ENCODE measurements at regions of chr6 and their contacts with region 1.

Region 1: DNA sequence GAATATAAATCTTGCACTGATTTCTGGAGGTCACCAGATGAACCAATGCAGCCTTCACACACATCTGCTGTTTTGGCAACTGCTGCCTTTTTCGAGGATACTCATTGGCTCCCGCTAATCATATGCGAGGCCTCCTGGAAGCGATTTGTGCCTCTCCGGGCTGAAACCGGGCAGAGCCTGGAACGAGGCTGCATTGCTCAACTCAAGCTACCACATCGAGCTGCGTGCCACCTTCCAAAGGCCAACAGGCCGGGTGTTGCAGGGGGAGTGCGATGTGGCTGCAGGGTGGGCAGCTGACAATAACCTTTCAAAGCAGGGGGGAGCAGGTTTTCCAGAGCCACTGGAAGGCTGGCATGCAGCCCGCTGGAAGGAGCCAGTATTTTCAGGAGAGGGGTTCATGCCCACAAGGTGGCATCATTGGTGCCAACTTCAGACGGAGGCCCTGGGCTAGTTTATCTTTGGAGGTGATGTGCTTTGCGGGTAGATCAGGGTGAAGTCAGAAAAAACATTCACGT is 122.6 kb upstream of the IFNGR1 start:
- DNase-seq: peak; percentile 40 to 78 (median 46)
- H3K4me3 ChIP-seq: no peak overlapping the region
- H3K4me3 Mint-ChIP-seq: peak overlapping the region; percentile 18 to 84 (median 80)
- H3K27ac ChIP-seq: no peak overlapping the region
- H3K27ac Mint-ChIP-seq: peak overlapping the region in 2 of 8 donors; percentile 8 to 20
- H3K4me1 ChIP-seq: peaks cover 9% of the 10 kb centered on the region
- H3K4me1 Mint-ChIP-seq: peaks cover 25 to 35% (median 32%) of the 10 kb centered on the region in 3 donors
- H3K27me3 ChIP-seq: no peaks in the 10 kb centered on the region
- H3K27me3 Mint-ChIP-seq: peaks cover 0 to 1% of the 10 kb centered on the region in 2 donors

Region 2: GRCh38 chr6:137233911-137234863 is 107.6 kb before region 1 on chr6:
- CTCF ChIA-PET with region 1: no interaction called
- POLR2A ChIA-PET with region 1: no interaction called
- DNase-seq: peak in 2 of 5 donors; percentile 17 to 46
- H3K4me3 ChIP-seq: no peak overlapping the region
- H3K4me3 Mint-ChIP-seq: peak overlapping the region; percentile 42 to 89 (median 73)
- H3K27ac ChIP-seq: no peak overlapping the region
- H3K27ac Mint-ChIP-seq: peak overlapping the region; percentile 73 to 98 (median 88)
- H3K4me1 ChIP-seq: peaks cover 55% of the 10 kb centered on the region
- H3K4me1 Mint-ChIP-seq: peaks cover 68 to 79% (median 71%) of the 10 kb centered on the region in 3 donors
- H3K27me3 ChIP-seq: no peaks in the 10 kb centered on the region
- H3K27me3 Mint-ChIP-seq: no peaks in the 10 kb centered on the region

Region 3: GRCh38 chr6:137351890-137352289 is 10.2 kb after region 1 on chr6:
- CTCF ChIA-PET with region 1: interaction called, 10 read pairs
- POLR2A ChIA-PET with region 1: no interaction called
- DNase-seq: no peak
- H3K4me3 ChIP-seq: no peak overlapping the region
- H3K4me3 Mint-ChIP-seq: no peak overlapping the region
- H3K27ac ChIP-seq: no peak overlapping the region
- H3K27ac Mint-ChIP-seq: peak overlapping the region in 2 of 8 donors; percentile 18 to 40
- H3K4me1 ChIP-seq: peaks cover 15% of the 10 kb centered on the region
- H3K4me1 Mint-ChIP-seq: peaks cover 17 to 25% (median 22%) of the 10 kb centered on the region in 3 donors
- H3K27me3 ChIP-seq: no peaks in the 10 kb centered on the region
- H3K27me3 Mint-ChIP-seq: peaks cover 0 to 1% of the 10 kb centered on the region in 2 donors